ENCODE measurements at regions of chr6 and their contacts with region 1.

Region 1: GRCh38 chr6:155414049-155414448 is 41.6 kb downstream of the NOX3 start:
- DNase-seq: no peak
- H3K4me3 ChIP-seq: no peak overlapping the region
- H3K4me3 Mint-ChIP-seq: no peak overlapping the region
- H3K27ac ChIP-seq: no peak overlapping the region
- H3K27ac Mint-ChIP-seq: no peak overlapping the region
- H3K4me1 ChIP-seq: peaks cover 12% of the 10 kb centered on the region
- H3K4me1 Mint-ChIP-seq: peaks cover 18 to 22% (median 22%) of the 10 kb centered on the region in 3 donors
- H3K27me3 ChIP-seq: no peaks in the 10 kb centered on the region
- H3K27me3 Mint-ChIP-seq: no peaks in the 10 kb centered on the region

Region 2: GRCh38 chr6:155436981-155437749 is 23.1 kb after region 1 on chr6:
- CTCF ChIA-PET with region 1: no interaction called
- POLR2A ChIA-PET with region 1: interaction called, 13 read pairs
- DNase-seq: no peak
- H3K4me3 ChIP-seq: no peak overlapping the region
- H3K4me3 Mint-ChIP-seq: no peak overlapping the region
- H3K27ac ChIP-seq: no peak overlapping the region
- H3K27ac Mint-ChIP-seq: no peak overlapping the region
- H3K4me1 ChIP-seq: no peaks in the 10 kb centered on the region
- H3K4me1 Mint-ChIP-seq: no peaks in the 10 kb centered on the region
- H3K27me3 ChIP-seq: no peaks in the 10 kb centered on the region
- H3K27me3 Mint-ChIP-seq: peaks cover 6 to 18% of the 10 kb centered on the region in 2 donors

Measured in CD8-positive, alpha-beta memory T cell (primary cell).